Activated CD4-positive, alpha-beta T cell treated with anti-CD3 and anti-CD28 coated beads for 36 hours (primary cell): ENCODE measurements at regions of chr19 and their contacts with region 1.

Region 1: GRCh38 chr19:45469132-45469944 is 1.5 kb downstream of the FOSB start:
- DNase-seq: peak; percentile 97
- ATAC-seq: peak; percentile 82
- H3K4me3 Mint-ChIP-seq: peak overlapping the region; percentile 78
- H3K27ac Mint-ChIP-seq: peak overlapping the region; percentile 86
- H3K4me1 Mint-ChIP-seq: peaks cover 29% of the 10 kb centered on the region
- H3K27me3 Mint-ChIP-seq: peaks cover 11% of the 10 kb centered on the region

Region 2: GRCh38 chr19:45450012-45450333 is 19.4 kb before region 1 on chr19:
- CTCF ChIA-PET with region 1: interaction called, 6 read pairs
- POLR2A ChIA-PET with region 1: interaction called, 6 read pairs
- intact Hi-C with region 1: loop called (anchors 1 kb)
- DNase-seq: no peak
- ATAC-seq: peak; percentile 24
- H3K4me3 Mint-ChIP-seq: peak overlapping the region; percentile 95
- H3K27ac Mint-ChIP-seq: peak overlapping the region; percentile 97
- H3K4me1 Mint-ChIP-seq: peaks cover 34% of the 10 kb centered on the region
- H3K27me3 Mint-ChIP-seq: no peaks in the 10 kb centered on the region

Region 3: DNA sequence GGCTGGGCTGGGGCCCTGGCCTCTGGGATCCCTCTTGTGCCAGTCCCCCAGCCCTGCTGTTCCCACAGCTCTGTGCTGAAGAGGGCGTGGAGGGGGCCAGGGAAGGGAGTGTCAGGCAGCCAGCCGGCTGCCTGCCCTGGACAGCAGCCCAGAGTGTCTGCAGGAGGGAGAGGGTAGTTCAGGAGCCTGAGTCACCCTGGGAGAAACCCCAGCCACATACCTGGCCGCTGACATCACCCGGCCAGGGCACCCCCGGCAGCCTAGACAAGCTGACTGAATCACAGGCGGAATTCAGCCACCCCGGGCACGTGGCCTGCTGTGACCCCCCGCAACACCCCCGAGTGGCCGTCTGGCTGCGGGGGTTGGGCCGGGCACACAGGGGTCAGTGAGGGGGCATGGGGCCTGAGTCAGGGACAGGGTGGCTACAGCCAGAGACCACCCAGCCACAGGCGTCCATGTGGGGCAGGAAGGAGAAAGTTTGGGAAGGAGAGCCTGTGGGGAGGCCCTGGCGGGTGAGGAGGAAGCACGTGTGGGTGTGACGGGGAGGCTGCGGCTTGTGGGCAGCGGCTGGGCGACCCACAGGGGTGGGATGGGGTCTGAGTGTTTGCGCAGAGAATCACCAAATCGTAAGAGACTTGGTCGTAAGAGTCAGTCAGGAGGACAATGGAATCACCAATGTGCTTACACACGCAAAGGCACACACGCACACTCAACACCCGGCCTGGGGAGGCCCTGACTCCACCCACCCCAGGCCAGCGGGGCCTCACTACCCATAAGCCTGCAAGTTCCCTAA is 13.4 kb before region 1 on chr19:
- CTCF ChIA-PET with region 1: interaction called, 9 read pairs
- POLR2A ChIA-PET with region 1: interaction called, 6 read pairs
- intact Hi-C with region 1: loop called in 1 of 2 experiments (anchors 1 kb)
- DNase-seq: peak; percentile 84
- ATAC-seq: peak; percentile 82
- H3K4me3 Mint-ChIP-seq: peak overlapping the region; percentile 5
- H3K27ac Mint-ChIP-seq: peak overlapping the region; percentile 65
- H3K4me1 Mint-ChIP-seq: peaks cover 23% of the 10 kb centered on the region
- H3K27me3 Mint-ChIP-seq: no peaks in the 10 kb centered on the region

Region 4: DNA sequence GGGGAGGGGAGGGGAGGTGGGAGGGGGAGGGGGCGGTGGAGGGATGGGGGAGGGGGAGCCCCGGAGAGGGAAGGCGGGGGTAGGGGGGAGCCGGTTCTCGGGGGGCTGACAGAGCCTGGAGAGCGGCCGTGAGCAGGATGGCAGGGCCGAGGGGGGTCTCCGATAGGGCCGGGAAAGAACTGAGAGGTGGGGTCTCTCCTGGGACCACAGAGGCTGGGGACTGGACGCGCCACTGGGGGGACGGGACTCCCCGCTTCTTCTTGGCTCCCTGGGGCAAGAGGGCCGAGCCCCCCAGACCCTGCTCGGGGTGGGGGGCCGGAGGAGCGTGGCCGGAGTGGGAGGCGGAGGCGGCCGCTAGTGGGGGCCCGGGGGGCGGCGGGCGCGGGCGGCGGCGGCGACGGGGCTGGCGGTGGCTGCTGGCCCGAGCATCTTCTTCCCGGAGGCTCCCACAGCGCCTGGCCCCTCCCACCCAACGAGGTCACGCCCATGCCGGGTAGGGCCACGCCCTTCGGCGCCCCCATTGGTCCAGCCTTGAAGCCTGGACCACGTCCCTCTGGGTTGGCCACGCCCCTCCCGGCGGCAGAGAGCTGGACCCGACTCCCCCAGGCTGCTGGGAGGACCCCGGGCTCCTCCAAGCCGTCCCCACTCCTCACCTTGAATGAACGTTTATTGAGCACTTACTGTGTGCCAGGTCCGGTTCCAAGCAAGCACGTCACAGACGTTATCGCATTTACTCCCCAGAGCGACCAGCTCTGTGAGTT is 504.4 kb after region 1 on chr19 and contains the start of gene NOVA2:
- CTCF ChIA-PET with region 1: no interaction called
- POLR2A ChIA-PET with region 1: no interaction called
- intact Hi-C with region 1: no loop called
- DNase-seq: peak; percentile 78
- ATAC-seq: peak; percentile 82
- H3K4me3 Mint-ChIP-seq: no peak within 1 kb of the TSS
- H3K27ac Mint-ChIP-seq: no peak within 1 kb of the TSS
- H3K4me1 Mint-ChIP-seq: peaks cover 17% of the 10 kb centered on the region
- H3K27me3 Mint-ChIP-seq: peaks cover 51% of the 10 kb centered on the region
- total RNA-seq, gene NOVA2: 0.02 to 0.09 TPM

Region 5: GRCh38 chr19:47322058-47322457 is 1852.7 kb after region 1 on chr19:
- CTCF ChIA-PET with region 1: no interaction called
- POLR2A ChIA-PET with region 1: interaction called, 13 read pairs
- intact Hi-C with region 1: no loop called
- DNase-seq: no peak
- ATAC-seq: no peak
- H3K4me3 Mint-ChIP-seq: no peak overlapping the region
- H3K27ac Mint-ChIP-seq: no peak overlapping the region
- H3K4me1 Mint-ChIP-seq: no peaks in the 10 kb centered on the region
- H3K27me3 Mint-ChIP-seq: peaks cover 14% of the 10 kb centered on the region